Panc1 (cell line): ENCODE measurements at regions of chr17 and their contacts with region 1.

Region 1: DNA sequence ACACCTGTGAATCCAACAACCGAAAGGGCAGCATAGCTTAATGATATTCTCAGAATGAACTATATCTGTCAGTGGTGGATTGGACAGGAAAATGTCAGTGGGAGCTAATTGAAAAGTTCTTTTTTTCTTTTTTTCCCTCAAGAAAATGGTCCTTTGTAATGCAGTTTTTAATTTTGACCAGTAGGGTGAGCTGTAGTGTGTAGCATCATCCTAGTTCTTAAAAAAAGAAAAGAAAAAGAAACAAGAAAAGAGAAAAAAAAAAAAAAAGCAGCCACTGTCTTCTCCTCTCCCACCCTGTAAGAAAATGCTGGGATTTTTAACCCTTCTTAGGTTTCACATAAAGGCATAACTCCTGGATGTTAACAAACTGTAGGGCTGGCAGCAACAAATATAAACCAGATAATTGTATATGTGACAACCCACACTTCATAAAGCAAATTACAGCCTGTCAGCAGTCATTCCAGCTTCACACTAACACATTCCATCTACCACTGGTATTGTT is 78.1 kb downstream of the SKAP1 start:
- DNase-seq: no peak
- ATAC-seq: no peak
- H3K4me3 ChIP-seq: no peak overlapping the region
- H3K27ac ChIP-seq: peak overlapping the region; percentile 29; the same call in 1 of the 2 replicates
- H3K4me1 ChIP-seq: peaks cover 6% of the 10 kb centered on the region; the same call in 1 of the 2 replicates
- H3K27me3 ChIP-seq: no peaks in the 10 kb centered on the region
- CTCF ChIP-seq: peak; percentile 81; the same call in 1 of the 2 replicates

Region 2: GRCh38 chr17:47867813-47868533 is 483.9 kb before region 1 on chr17:
- CTCF ChIA-PET with region 1: no interaction called
- POLR2A ChIA-PET with region 1: interaction called, 13 read pairs
- in situ Hi-C with region 1: no loop called
- intact Hi-C with region 1: no loop called
- DNase-seq: no peak
- ATAC-seq: no peak
- H3K4me3 ChIP-seq: no peak overlapping the region
- H3K27ac ChIP-seq: no peak overlapping the region
- H3K4me1 ChIP-seq: peaks cover 7% of the 10 kb centered on the region
- H3K27me3 ChIP-seq: no peaks in the 10 kb centered on the region
- CTCF ChIP-seq: no peak

Region 3: DNA sequence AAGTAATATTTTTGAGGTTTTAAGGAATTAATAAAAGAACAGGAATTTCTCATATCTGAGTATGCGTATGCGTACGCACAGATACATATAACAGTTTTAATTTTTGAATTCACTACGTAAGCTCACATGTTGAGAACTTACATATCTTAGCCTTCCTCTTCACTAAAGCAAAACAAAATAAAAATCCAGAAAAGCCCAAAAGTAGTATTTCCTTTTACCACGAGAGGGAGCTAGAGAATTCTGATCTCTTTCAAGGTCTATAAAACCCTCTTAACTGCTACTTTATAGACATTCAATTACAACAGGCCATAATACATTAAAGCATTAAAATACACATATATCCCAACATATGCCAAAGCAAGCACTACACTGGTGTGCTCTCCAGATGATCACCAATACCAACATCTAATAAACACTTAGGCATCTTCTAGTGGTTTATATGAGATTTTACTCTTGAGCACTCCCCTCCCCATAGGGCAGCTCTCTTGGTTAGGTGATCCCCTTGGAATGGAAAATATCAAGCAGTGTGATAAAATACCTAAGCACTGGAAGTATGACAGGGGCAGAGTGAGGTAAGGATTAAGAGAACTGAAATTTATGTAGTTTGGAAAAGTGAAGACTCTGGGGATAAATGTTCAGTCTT is 15.9 kb before region 1 on chr17:
- CTCF ChIA-PET with region 1: interaction called, 12 read pairs
- POLR2A ChIA-PET with region 1: no interaction called
- in situ Hi-C with region 1: no loop called
- intact Hi-C with region 1: no loop called
- DNase-seq: peak; percentile 62
- ATAC-seq: peak; percentile 82
- H3K4me3 ChIP-seq: no peak overlapping the region
- H3K27ac ChIP-seq: peak overlapping the region; percentile 44; the same call in 1 of the 2 replicates
- H3K4me1 ChIP-seq: peaks cover 13% of the 10 kb centered on the region
- H3K27me3 ChIP-seq: no peaks in the 10 kb centered on the region
- CTCF ChIP-seq: peak; percentile 76; the same call in 1 of the 2 replicates

Region 4: DNA sequence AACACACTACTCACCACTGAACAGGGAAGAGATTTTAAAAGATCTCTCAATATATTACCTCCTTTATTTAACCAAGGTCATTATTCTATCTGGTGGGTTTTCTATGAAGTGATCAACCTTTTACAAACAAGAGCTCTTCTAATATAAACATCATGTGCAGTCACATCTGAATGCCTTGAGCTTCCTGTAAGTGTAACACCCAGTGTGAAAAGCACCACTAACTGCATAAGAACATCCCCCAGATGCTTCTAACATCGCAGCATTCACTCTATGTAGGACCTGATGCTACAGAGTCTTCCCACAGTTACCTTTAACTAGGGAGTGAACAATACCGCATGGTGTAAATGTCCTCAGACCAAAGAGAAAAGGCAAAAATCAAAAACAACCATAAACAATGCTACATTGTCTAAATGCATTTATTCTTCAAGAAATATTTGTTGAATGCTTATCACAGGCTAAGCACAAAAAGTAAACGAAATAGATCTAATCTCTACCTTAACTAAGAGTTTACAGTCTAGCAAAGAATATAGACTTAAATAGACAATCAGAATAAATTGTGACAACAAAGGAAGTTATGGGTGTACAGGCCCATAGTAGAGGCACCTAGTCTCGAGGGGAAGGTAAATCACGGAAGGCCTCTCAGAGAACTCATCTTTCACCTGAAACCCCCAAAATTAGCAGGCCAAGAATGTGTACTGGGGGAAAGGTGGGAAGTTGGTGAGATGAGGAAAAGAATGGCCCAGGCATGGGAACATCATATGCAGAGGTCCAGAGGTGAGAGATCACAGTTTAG is 61.9 kb after region 1 on chr17:
- CTCF ChIA-PET with region 1: interaction called, 16 read pairs
- POLR2A ChIA-PET with region 1: no interaction called
- in situ Hi-C with region 1: no loop called
- intact Hi-C with region 1: no loop called
- DNase-seq: no peak
- ATAC-seq: no peak
- H3K4me3 ChIP-seq: no peak overlapping the region
- H3K27ac ChIP-seq: no peak overlapping the region
- H3K4me1 ChIP-seq: 0 out of 2 replicates have a peak, but pooled peaks cover 2% of the 10 kb centered on the region
- H3K27me3 ChIP-seq: peaks cover 9% of the 10 kb centered on the region
- CTCF ChIP-seq: no peak

Region 5: GRCh38 chr17:48441231-48441711 is 89.4 kb after region 1 on chr17:
- CTCF ChIA-PET with region 1: no interaction called
- POLR2A ChIA-PET with region 1: no interaction called
- in situ Hi-C with region 1: no loop called
- intact Hi-C with region 1: no loop called
- DNase-seq: no peak
- ATAC-seq: no peak
- H3K4me3 ChIP-seq: no peak overlapping the region
- H3K27ac ChIP-seq: no peak overlapping the region
- H3K4me1 ChIP-seq: no peaks in the 10 kb centered on the region
- H3K27me3 ChIP-seq: no peaks in the 10 kb centered on the region
- CTCF ChIP-seq: no peak

Region 6: DNA sequence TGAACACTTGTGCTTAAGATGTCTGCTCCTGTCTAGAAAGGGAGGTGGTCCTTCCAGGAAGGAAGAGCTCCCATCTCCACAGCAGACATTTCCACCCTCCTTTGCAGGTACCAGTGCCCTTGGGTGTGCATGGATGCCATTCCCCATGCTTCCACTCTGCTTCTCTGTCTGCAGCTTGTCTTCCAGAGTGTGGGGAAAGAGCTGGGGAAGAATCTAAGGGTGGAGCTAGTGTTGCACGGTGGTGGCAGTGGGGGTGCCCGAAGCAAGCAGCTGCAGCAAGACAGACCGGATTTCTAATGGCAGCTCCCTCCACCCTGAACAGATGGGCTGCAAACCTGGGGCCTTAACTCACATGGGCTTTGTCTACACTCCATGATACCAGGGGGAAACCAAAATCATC is 399.3 kb after region 1 on chr17:
- CTCF ChIA-PET with region 1: interaction called, 12 read pairs
- POLR2A ChIA-PET with region 1: no interaction called
- in situ Hi-C with region 1: no loop called
- intact Hi-C with region 1: no loop called
- DNase-seq: no peak
- ATAC-seq: peak; percentile 63
- H3K4me3 ChIP-seq: no peak overlapping the region
- H3K27ac ChIP-seq: no peak overlapping the region
- H3K4me1 ChIP-seq: peaks cover 14% of the 10 kb centered on the region
- H3K27me3 ChIP-seq: peaks cover 4% of the 10 kb centered on the region; the same call in 1 of the 2 replicates
- CTCF ChIP-seq: no peak

Region 7: DNA sequence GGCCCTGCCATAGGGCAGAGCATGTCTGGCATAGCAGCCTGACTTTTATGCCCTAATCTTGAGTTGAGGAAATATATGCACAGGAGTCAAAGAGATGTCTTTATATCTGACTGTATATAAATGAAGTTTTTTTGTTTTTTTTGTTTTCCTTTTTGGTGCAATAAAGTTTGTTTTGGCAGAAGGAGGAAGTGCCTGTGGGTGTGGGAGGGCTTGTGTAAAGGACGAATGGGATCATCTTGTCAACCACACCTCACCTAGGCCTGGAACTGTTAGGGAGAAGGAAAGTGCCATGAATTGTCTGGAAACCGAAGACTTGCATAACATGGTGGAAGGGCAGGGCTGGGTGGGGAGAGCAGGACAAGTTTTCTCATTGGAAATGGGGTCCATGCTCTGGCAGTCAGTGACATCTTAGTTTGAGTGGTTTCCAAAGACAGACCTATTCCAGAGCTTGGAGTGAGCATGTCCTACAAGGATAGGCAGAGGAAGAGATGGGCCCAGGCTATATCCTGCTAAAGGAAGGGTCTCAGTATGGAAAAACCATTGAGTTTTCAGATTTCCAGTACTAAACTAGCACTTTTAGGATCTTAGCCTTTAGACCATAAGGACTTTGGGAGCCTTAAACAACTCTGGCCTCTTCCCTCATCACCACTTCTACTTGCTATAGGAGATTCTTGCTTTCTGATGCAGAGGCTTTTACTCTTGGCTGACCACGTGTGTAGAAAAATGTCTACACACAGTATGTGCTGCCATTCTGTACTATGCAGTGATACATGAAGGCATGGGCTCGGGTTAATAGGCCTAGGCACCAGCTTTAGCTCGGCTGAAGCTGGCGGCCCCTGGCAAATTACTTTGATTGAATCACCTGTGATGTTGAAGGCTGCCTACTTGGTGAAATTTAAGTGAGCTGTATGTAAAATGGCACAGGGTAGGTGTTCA is 577.3 kb after region 1 on chr17:
- CTCF ChIA-PET with region 1: no interaction called
- POLR2A ChIA-PET with region 1: no interaction called
- in situ Hi-C with region 1: no loop called
- intact Hi-C with region 1: no loop called
- DNase-seq: no peak
- ATAC-seq: peak; percentile 23
- H3K4me3 ChIP-seq: no peak overlapping the region
- H3K27ac ChIP-seq: peak overlapping the region; percentile 18; the same call in 1 of the 2 replicates
- H3K4me1 ChIP-seq: peaks cover 9% of the 10 kb centered on the region
- H3K27me3 ChIP-seq: no peaks in the 10 kb centered on the region
- CTCF ChIP-seq: no peak